Mammary epithelial cell (primary cell): ENCODE measurements at regions of chr4 and their contacts with region 1.

Region 1: DNA sequence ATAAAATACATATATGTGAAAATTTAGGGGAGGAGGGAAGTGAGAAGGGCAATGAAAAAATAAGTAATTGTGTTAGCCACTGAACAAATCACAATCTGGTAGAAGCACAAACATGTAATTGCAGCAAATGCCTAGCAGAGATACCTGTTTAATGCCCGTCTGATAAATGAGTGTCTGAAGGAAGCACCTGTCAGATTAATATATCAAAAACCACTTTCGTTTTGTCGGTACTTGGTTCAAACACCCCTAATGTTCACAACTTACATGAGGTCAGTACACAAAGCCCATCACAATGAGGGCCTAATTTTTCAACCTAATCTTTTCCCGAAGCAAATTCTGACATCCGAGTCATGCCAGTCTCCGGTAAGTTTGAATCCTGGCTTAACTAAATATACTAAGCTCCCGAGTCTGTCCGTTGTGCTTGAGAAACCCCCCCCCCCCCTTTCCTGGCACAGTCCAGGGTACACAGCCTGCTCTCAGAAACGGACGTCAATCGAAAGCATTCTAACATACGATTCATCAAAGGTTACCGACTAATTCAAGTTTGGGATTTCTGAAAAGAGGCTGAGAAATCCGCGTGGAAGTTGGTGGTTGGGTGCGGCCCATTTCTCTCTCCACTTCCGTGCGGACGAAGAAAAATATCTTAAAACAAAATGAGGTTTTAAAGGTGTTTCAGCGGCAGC is 758 bp downstream of the SDAD1 start:
- DNase-seq: peak; percentile 5
- H3K4me3 ChIP-seq: peak overlapping the region; percentile 82 to 90 (median 88)
- H3K27ac ChIP-seq: peak overlapping the region; percentile 78
- H3K4me1 ChIP-seq: peaks cover 22% of the 10 kb centered on the region
- H3K27me3 ChIP-seq: no peaks in the 10 kb centered on the region
- CTCF ChIP-seq: no peak

Region 2: GRCh38 chr4:76055016-76055415 is 65.0 kb after region 1 on chr4:
- CTCF ChIA-PET with region 1: no interaction called
- dilution Hi-C with region 1: loop called (anchors 5 kb)
- in situ Hi-C with region 1: no loop called
- intact Hi-C with region 1: no loop called
- DNase-seq: no peak
- H3K4me3 ChIP-seq: no peak overlapping the region
- H3K27ac ChIP-seq: no peak overlapping the region
- H3K4me1 ChIP-seq: peaks cover 20% of the 10 kb centered on the region
- H3K27me3 ChIP-seq: no peaks in the 10 kb centered on the region
- CTCF ChIP-seq: no peak

Region 3: DNA sequence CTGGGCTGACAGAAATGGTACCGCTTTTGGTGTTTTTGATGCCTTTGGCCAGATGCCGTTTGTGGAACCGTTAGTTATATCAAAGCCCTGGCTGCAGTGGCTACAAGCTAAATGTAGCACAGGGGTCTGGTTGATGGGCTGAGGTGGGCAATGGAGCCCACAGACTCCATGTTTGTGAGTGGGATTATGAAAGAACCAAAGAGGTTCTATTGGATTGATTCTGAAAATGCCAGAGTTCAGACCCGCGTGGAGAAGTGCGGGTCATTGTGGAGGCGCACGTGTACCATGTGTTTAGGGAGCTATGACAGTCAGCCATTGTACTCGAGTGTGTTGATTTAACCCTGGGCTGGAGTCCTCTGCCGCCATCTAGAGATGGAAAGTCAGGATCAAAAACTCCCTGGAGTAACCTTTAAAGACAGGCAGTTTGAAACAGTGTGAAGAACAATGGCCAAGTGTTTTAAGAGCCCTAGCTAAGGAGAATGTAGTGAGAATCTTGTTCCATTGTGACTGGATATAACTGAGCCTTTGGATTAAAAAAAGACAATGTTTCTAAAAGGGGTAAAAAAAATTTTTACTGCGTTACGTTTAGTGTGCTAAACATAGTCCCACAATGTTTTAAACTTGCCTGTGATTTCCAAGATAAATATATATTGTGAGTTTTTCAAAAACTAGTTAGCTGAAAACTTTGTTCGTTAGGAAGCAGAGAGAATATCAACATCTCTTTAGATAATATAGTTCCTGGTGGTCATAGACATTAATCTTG is 97.2 kb after region 1 on chr4:
- CTCF ChIA-PET with region 1: no interaction called
- dilution Hi-C with region 1: loop called (anchors 5 kb)
- in situ Hi-C with region 1: no loop called
- intact Hi-C with region 1: loop called (anchors 1 kb)
- DNase-seq: peak; percentile 82
- H3K4me3 ChIP-seq: no peak overlapping the region
- H3K27ac ChIP-seq: no peak overlapping the region
- H3K4me1 ChIP-seq: peaks cover 21% of the 10 kb centered on the region
- H3K27me3 ChIP-seq: no peaks in the 10 kb centered on the region
- CTCF ChIP-seq: peak; percentile 76 to 82

Region 4: DNA sequence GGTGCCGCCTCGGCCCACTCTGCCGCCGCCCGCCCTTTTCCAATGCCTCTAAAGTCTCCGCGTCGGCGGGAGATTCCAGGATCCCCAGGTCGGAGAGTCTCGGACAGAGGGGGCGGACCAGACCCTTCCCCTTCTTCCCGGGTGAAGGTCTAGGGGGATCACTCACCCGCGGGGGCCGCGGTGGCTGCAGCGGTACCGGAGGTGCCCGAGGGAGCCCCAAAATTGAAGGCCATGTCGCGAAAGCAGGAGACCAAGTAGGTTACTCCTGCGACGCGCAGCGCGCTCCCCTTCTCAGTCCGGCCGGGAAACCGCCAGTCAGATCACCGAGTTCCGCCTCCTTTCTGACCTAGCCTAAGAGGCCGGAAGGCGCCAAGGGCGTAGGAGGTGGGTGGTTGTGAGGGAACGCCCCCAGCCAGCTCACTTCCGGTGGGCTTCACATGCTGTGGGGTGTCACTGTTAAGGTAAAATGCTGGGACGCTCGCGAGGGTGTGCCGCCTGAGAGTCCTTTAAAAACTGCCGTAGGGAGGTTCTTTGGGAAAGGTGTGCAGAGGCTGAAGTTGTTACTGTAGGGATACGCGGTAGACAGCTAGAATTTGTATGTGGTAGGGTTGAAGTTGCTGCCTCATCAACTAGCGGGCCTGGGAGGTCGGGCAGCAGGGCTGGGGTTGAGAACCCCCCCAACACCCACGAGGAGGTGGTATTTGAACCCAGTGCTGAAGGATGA is 158.3 kb after region 1 on chr4 and contains the start of gene NUP54:
- CTCF ChIA-PET with region 1: no interaction called
- dilution Hi-C with region 1: no loop called
- in situ Hi-C with region 1: no loop called
- intact Hi-C with region 1: loop called (anchors 2 kb)
- DNase-seq: peak; percentile 95
- H3K4me3 ChIP-seq: peak within 1 kb of the TSS; percentile 56 to 85 (median 73)
- H3K27ac ChIP-seq: peak within 1 kb of the TSS; percentile 76
- H3K4me1 ChIP-seq: peaks cover 17% of the 10 kb centered on the region
- H3K27me3 ChIP-seq: no peaks in the 10 kb centered on the region
- CTCF ChIP-seq: no peak
- total RNA-seq, gene NUP54: 45.3 to 48.6 TPM